ENCODE measurements at regions of chr12 and their contacts with region 1.

Region 1: DNA sequence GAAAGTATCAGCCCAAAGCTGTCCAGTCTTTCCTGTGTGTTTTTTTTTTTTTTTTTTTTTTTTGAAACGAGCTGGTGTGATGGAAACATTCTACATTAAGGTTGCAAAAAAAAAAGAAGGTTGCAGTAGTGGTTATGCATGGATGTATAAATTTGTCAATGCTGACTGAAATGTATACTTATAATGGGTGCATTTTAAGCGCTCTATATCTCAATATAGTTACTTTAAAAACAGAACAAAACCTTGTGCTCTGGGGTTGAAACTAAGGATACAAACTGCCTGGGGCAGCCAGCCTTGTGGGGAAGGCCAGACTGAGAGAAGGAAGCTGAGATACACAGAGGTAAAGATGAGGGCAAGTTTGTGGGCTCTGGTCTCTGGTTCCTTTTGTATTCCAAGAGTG is 87.3 kb upstream of the RMST start:
- DNase-seq: no peak
- H3K4me3 ChIP-seq: no peak overlapping the region
- H3K27ac ChIP-seq: no peak overlapping the region
- H3K4me1 ChIP-seq: no peaks in the 10 kb centered on the region
- H3K27me3 ChIP-seq: no peaks in the 10 kb centered on the region
- CTCF ChIP-seq: no peak
- POLR2A ChIP-seq: no peak

Region 2: DNA sequence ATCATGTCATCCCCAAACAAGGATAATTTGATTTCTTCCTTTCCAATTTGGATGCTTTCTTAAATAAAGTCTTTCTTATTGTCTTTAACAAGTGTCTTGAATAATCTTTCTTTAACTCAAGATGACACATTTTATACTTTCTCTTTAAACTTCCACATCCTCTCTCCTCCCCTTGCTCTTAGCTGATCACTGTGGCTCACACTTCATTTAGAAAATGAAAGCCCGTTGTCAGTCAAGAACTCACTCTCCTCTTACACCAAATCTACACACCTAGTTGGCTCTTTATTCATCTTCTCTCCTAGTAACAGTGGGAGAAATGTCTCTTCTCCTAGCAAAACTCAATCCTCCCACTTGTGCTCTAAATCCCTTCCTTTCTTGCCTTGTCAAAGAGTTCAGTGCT is 76.9 kb after region 1 on chr12:
- intact Hi-C with region 1: loop called (anchors 2 kb)
- DNase-seq: no peak
- H3K4me3 ChIP-seq: no peak overlapping the region
- H3K27ac ChIP-seq: no peak overlapping the region
- H3K4me1 ChIP-seq: no peaks in the 10 kb centered on the region
- H3K27me3 ChIP-seq: no peaks in the 10 kb centered on the region
- CTCF ChIP-seq: no peak
- POLR2A ChIP-seq: no peak

Measured in breast epithelium (tissue), 4 donors.